ENCODE measurements at regions of chr19 and their contacts with region 1.

Region 1: DNA sequence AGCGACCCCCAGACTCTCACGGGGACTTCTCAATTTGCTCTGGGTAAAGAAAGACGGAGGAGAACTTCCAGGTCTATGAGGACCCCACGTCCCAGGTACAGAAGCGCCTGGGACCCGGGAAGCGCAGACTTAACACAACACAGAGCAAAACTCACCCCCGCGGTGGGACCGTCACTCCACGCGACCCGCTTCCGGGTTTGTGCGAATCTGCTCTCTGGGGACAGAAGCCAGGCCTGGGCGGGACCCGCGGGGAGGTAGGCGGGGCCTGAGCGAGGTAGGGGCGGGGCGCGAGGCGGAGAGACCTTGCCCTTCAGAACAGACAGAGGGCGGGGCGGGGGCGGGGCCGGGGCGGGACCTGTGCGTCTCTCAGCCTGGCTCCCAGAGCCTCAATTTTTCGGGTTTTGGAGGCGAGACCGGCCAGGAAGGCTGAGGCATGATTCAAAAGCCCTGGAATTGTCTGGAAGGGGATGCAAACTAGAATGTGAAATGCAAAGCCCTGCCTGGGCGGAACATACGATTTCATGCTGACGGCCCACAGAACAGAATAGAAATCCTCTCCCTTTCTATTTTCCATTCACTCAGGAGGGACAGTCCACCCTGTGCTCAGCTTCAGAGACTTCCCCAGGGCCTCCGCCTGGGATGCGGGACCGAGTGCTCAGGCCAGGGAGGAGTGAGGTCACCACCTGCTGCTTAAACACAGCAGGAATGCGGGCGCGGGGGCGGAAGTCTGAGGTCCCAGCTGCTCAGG is 19.3 kb upstream of the ZNF888 start:
- DNase-seq: peak; percentile 88 to 99 (median 95)
- ATAC-seq: peak; percentile 100
- H3K4me3 ChIP-seq: peak overlapping the region; percentile 98
- H3K4me3 Mint-ChIP-seq: peak overlapping the region; percentile 87 to 95 (median 92)
- H3K27ac ChIP-seq: peak overlapping the region; percentile 85
- H3K27ac Mint-ChIP-seq: peak overlapping the region; percentile 33 to 94 (median 89)
- H3K4me1 ChIP-seq: peaks cover 0 to 4% of the 10 kb centered on the region in 2 donors
- H3K4me1 Mint-ChIP-seq: peaks cover 12 to 27% (median 16%) of the 10 kb centered on the region in 7 donors
- H3K27me3 ChIP-seq: no peaks in the 10 kb centered on the region
- H3K27me3 Mint-ChIP-seq: no peaks in the 10 kb centered on the region

Region 2: GRCh38 chr19:52584736-52585440 is 357.7 kb before region 1 on chr19:
- CTCF ChIA-PET with region 1: no interaction called
- POLR2A ChIA-PET with region 1: no interaction called
- intact Hi-C with region 1: no loop called
- DNase-seq: no peak
- ATAC-seq: no peak
- H3K4me3 ChIP-seq: no peak overlapping the region
- H3K4me3 Mint-ChIP-seq: no peak overlapping the region
- H3K27ac ChIP-seq: no peak overlapping the region
- H3K27ac Mint-ChIP-seq: no peak overlapping the region
- H3K4me1 ChIP-seq: no peaks in the 10 kb centered on the region
- H3K4me1 Mint-ChIP-seq: no peaks in the 10 kb centered on the region
- H3K27me3 ChIP-seq: no peaks in the 10 kb centered on the region
- H3K27me3 Mint-ChIP-seq: no peaks in the 10 kb centered on the region

Region 3: GRCh38 chr19:52993323-52994178 is 51.0 kb after region 1 on chr19:
- CTCF ChIA-PET with region 1: no interaction called
- POLR2A ChIA-PET with region 1: no interaction called
- intact Hi-C with region 1: loop called in 1 of 2 experiments (anchors 1 kb)
- DNase-seq: peak; percentile 49 to 85 (median 81)
- ATAC-seq: peak; percentile 100
- H3K4me3 ChIP-seq: peak overlapping the region; percentile 60
- H3K4me3 Mint-ChIP-seq: peak overlapping the region; percentile 56 to 92 (median 86)
- H3K27ac ChIP-seq: no peak overlapping the region
- H3K27ac Mint-ChIP-seq: peak overlapping the region in 5 of 9 donors; percentile 25 to 83 (median 54)
- H3K4me1 ChIP-seq: peaks cover 0 to 6% of the 10 kb centered on the region in 2 donors
- H3K4me1 Mint-ChIP-seq: peaks cover 8 to 26% (median 14%) of the 10 kb centered on the region in 7 donors
- H3K27me3 ChIP-seq: no peaks in the 10 kb centered on the region
- H3K27me3 Mint-ChIP-seq: peaks cover 0 to 23% (median 14%) of the 10 kb centered on the region in 5 donors

Region 4: GRCh38 chr19:53112286-53112685 is 169.7 kb after region 1 on chr19:
- CTCF ChIA-PET with region 1: no interaction called
- POLR2A ChIA-PET with region 1: no interaction called
- intact Hi-C with region 1: no loop called
- DNase-seq: no peak
- ATAC-seq: no peak
- H3K4me3 ChIP-seq: no peak overlapping the region
- H3K4me3 Mint-ChIP-seq: no peak overlapping the region
- H3K27ac ChIP-seq: no peak overlapping the region
- H3K27ac Mint-ChIP-seq: no peak overlapping the region
- H3K4me1 ChIP-seq: no peaks in the 10 kb centered on the region
- H3K4me1 Mint-ChIP-seq: no peaks in the 10 kb centered on the region
- H3K27me3 ChIP-seq: no peaks in the 10 kb centered on the region
- H3K27me3 Mint-ChIP-seq: peaks cover 0 to 17% (median 2%) of the 10 kb centered on the region in 5 donors

Measured in naive thymus-derived CD4-positive, alpha-beta T cell (primary cell).